ENCODE measurements at regions of chr3 and their contacts with region 1.

Region 1: GRCh38 chr3:134794950-134795745 is at the start of gene EPHB1:
- DNase-seq: peak; percentile 86
- CTCF ChIP-seq: peak; percentile 93

Region 2: DNA sequence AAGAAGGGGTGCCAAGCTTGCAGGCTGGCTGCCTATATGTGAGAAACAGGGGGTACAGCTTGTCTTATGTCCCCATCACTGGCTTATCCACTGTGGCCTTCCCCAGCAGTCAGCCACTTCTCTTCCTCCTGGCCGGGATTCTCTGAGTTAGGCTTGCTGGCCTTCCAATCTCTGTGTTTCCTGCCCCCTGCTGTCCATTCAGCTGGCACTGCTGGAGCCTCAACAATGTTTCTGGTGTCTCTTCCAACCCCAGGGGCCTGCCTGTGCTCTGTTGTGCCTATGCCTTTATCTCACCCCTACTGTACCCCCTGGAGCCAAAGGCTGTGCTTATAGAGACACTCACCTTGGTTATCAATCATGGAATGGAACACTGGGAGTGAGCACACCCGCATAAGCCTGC is 345.9 kb before region 1 on chr3:
- in situ Hi-C with region 1: no loop called
- DNase-seq: no peak
- CTCF ChIP-seq: peak; percentile 20

Region 3: DNA sequence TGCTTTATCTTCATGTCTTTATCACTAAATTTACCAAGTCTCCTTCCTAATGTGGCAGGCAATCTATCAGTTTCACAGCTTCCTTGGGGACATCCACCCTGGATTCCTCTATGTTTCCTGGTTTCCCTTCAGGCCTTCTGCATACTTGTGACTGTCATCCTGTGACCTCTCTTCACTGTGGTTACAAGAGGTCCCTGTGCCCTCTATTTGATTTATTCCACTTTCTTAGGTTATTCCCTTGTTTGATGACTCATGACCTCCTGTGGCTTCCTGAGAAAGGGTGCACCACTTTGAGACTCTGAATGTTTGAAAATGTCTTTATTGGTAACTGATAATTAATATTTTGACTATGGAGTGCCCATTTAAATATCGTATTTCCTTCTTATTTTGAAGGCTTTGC is 83.9 kb before region 1 on chr3:
- in situ Hi-C with region 1: no loop called
- DNase-seq: no peak
- CTCF ChIP-seq: no peak

Region 4: GRCh38 chr3:135503760-135504686 is 708.9 kb after region 1 on chr3:
- in situ Hi-C with region 1: loop called (anchors 25 kb)
- DNase-seq: peak; percentile 52
- CTCF ChIP-seq: peak; percentile 9

Region 5: GRCh38 chr3:135851201-135852081 is 1056.3 kb after region 1 on chr3:
- in situ Hi-C with region 1: loop called (anchors 25 kb)
- DNase-seq: no peak
- CTCF ChIP-seq: no peak

Measured in GM13976 (cell line).